Gastrocnemius medialis (tissue), 4 donors: ENCODE measurements at regions of chr2 and their contacts with region 1.

Region 1: DNA sequence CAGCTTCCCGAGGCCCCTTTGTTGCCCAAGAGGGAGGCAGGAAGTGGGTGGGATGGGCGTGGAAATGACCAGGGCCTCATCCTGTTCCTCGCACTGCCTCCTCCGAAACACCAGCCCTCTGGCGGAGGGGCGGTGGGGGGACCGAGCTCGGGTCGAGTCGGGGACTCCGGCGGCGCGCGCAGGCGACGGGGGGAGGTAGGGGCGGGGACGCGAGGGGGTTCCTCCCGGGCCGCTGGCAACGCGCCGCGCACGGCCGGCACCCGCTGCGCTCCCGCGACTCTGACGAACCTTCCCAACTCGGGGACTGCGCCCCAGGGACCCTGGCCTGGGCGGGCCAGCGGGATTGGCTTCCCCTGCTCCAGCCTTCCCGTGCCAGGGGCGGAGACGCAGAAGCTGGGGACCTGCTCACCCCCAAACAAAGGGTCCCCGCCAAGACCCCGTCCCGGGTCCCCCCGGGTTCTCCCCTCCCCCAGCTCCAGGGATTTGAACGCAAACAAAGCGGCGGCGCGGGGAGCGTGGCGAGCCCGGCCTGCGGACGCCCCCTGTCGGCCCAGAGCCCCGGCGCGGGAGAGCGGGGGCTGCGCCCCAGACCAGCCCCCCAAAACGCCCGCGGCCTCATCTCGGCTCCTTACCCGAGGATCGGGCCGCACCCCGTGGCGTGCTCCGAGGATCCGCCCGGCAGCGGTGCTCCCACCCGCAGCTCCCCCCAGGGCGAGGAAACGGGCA is 1.2 kb downstream of the SEMA4C start:
- DNase-seq: peak; percentile 68 to 75
- ATAC-seq: peak; percentile 56
- H3K4me3 ChIP-seq: peak overlapping the region; percentile 74 to 95 (median 80)
- H3K27ac ChIP-seq: peak overlapping the region; percentile 86 to 90 (median 87)
- H3K4me1 ChIP-seq: peaks cover 24 to 29% of the 10 kb centered on the region in 2 donors
- H3K27me3 ChIP-seq: no peaks in the 10 kb centered on the region
- CTCF ChIP-seq: peak; percentile 55 to 73 (median 68)
- POLR2A ChIP-seq: peak; percentile 35 to 43

Region 2: GRCh38 chr2:96584017-96584416 is 284.7 kb before region 1 on chr2:
- in situ Hi-C with region 1: no loop called
- intact Hi-C with region 1: no loop called
- DNase-seq: no peak
- ATAC-seq: peak in 1 of 2 donors; percentile 39
- H3K4me3 ChIP-seq: no peak overlapping the region
- H3K27ac ChIP-seq: no peak overlapping the region
- H3K4me1 ChIP-seq: peaks cover 6 to 11% of the 10 kb centered on the region in 2 donors
- H3K27me3 ChIP-seq: no peaks in the 10 kb centered on the region
- CTCF ChIP-seq: no peak
- POLR2A ChIP-seq: no peak

Region 3: GRCh38 chr2:96907115-96908041 is 38.7 kb after region 1 on chr2:
- in situ Hi-C with region 1: no loop called
- intact Hi-C with region 1: loop called (anchors 2 kb)
- DNase-seq: peak; percentile 53 to 79
- ATAC-seq: peak; percentile 77 to 88
- H3K4me3 ChIP-seq: peak overlapping the region; percentile 18 to 32 (median 24)
- H3K27ac ChIP-seq: peak overlapping the region; percentile 69 to 80 (median 78)
- H3K4me1 ChIP-seq: peaks cover 24 to 26% of the 10 kb centered on the region in 2 donors
- H3K27me3 ChIP-seq: no peaks in the 10 kb centered on the region
- CTCF ChIP-seq: peak in 2 of 5 experiments; percentile 4 to 12
- POLR2A ChIP-seq: peak; percentile 26 to 38